Tibial artery (tissue), 4 donors: ENCODE measurements at regions of chr2 and their contacts with region 1.

Region 1: GRCh38 chr2:238720232-238720672 is 127.6 kb upstream of the TWIST2 start:
- DNase-seq: peak; percentile 65 to 75
- H3K4me3 ChIP-seq: no peak overlapping the region
- H3K27ac ChIP-seq: no peak overlapping the region
- H3K4me1 ChIP-seq: peaks cover 0 to 5% (median 0%) of the 10 kb centered on the region in 4 donors
- H3K27me3 ChIP-seq: peaks cover 0 to 6% of the 10 kb centered on the region in 2 donors
- CTCF ChIP-seq: peak; percentile 67

Region 2: DNA sequence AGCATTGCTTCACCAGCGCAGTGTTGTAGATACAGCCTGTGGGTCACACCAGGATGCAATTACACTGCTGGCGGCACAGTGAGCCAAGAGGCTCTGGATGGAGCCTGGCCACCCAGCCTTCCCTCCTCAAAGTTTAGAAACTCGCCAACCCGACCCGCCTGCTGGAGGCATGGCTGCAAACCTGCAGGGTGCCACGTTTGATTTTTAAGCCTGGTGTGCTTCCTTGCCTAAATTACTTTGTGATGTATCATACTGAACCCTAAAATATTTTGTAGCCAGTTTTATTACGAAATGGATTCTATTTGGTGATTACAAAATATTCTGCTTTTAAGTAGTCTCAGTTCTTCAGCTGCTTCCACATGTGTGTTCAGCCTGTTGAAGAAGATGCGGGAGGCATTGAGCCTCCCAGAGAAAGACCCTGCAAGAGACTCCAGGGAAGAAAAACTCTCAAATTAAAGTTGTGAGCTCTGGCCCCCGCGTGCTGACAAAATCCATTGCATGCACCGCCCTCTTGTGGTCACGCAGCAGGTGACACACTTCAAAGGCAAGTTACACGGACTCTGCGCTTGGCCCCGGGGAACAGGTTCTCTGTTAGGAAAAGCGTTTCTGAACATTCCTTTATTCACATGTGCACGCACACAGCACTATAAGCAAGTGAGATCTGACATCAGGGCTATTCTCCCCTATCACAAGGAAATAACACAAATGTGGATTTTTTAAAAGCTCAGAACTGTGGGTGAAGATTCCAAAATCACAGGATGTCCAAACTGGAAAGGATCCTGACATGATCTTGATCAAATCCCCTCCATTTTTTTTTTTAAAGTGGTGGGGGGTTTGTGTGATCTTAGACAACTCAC is 64.6 kb after region 1 on chr2:
- intact Hi-C with region 1: loop called (anchors 2 kb)
- DNase-seq: peak; percentile 67 to 82
- H3K4me3 ChIP-seq: no peak overlapping the region
- H3K27ac ChIP-seq: no peak overlapping the region
- H3K4me1 ChIP-seq: peaks cover 0 to 11% (median 0%) of the 10 kb centered on the region in 4 donors
- H3K27me3 ChIP-seq: no peaks in the 10 kb centered on the region
- CTCF ChIP-seq: peak; percentile 80 to 92